ENCODE measurements at regions of chrX and their contacts with region 1.

Region 1: GRCh38 chrX:37926700-37927099 is 79.3 kb upstream of the DYNLT3 start:
- DNase-seq: no peak
- H3K4me3 ChIP-seq: no peak overlapping the region
- H3K27ac ChIP-seq: no peak overlapping the region
- H3K4me1 ChIP-seq: no peaks in the 10 kb centered on the region
- H3K27me3 ChIP-seq: no peaks in the 10 kb centered on the region
- CTCF ChIP-seq: peak; percentile 40 to 66 (median 47)
- EP300 ChIP-seq: no peak
- POLR2A ChIP-seq: no peak

Region 2: GRCh38 chrX:38166478-38167083 is 239.9 kb after region 1 on chrX:
- in situ Hi-C with region 1: loop called (anchors 10 to 25 kb)
- intact Hi-C with region 1: no loop called
- DNase-seq: no peak
- H3K4me3 ChIP-seq: no peak overlapping the region
- H3K27ac ChIP-seq: no peak overlapping the region
- H3K4me1 ChIP-seq: no peaks in the 10 kb centered on the region
- H3K27me3 ChIP-seq: no peaks in the 10 kb centered on the region
- CTCF ChIP-seq: peak; percentile 52 to 60 (median 54)
- EP300 ChIP-seq: no peak
- POLR2A ChIP-seq: no peak

Region 3: DNA sequence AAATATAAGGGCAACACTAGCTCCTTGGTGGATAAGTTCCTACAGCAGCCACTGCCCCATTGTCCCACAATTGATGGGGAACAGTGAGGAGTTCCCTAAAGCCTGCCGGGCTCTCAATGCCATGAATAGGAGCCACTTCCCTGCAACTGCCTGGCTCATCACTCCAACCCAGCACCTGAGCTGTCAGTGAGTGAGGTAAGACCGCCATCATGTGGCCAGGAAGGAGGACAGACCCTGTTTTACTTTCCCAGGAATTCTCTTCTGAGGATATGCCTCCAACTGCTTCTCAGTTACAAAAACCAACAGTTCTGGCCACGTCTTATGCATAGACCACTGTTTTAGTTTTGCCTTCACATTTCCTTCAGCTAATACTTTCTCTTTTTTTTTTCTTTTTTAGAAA is 248.4 kb after region 1 on chrX:
- in situ Hi-C with region 1: loop called in 3 of 4 experiments (anchors 10 to 25 kb)
- intact Hi-C with region 1: no loop called
- DNase-seq: peak; percentile 27
- H3K4me3 ChIP-seq: no peak overlapping the region
- H3K27ac ChIP-seq: no peak overlapping the region
- H3K4me1 ChIP-seq: no peaks in the 10 kb centered on the region
- H3K27me3 ChIP-seq: no peaks in the 10 kb centered on the region
- CTCF ChIP-seq: peak; percentile 15 to 44 (median 32)
- EP300 ChIP-seq: no peak
- POLR2A ChIP-seq: no peak

Measured in transverse colon (tissue), 4 donors.